Left cardiac atrium (tissue), 4 donors: ENCODE measurements at regions of chr4 and their contacts with region 1.

Region 1: GRCh38 chr4:77358315-77358928 is 201.4 kb downstream of the CCNG2 start:
- DNase-seq: no peak
- ATAC-seq: peak; percentile 60 to 61

Region 2: DNA sequence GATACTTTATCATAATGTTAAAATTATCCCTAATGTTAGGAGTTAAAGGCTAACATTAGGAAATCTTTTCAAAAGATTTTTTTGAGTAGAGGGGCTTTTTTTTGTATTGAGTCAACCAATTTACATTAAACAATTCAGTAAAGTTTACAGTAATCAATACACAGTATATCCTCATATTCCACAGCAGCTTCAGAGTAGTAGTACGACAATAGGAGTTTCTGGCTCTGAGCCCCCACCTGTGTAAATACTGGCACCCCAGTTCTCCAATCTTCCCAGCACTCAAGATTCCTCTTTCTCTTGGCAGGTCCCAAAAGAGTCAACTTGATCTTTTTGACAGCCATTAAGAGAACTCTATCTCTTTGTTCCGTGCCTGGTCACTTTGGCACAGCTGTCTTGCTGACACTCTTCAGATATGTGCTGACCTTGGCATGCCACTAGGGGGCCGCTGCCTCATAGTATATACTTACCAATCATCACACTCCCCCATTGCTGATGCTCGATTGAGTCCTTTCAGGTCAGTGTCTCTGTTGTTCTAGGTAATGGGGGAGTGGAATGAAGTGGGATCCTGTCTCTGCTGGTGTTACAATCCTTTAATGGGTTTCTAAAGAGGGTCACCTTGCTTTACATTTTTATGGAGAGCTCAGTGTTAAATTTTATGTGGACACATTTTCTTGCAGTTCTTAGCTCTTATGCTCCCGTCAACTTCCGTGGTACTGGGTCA is 263.2 kb before region 1 on chr4:
- intact Hi-C with region 1: loop called in 1 of 2 experiments (anchors 10 kb)
- DNase-seq: peak; percentile 84
- ATAC-seq: peak; percentile 95 to 96

Region 3: GRCh38 chr4:77240469-77241066 is 117.9 kb before region 1 on chr4:
- intact Hi-C with region 1: loop called (anchors 2 to 5 kb)
- DNase-seq: peak; percentile 54
- ATAC-seq: peak; percentile 79 to 82